ENCODE measurements at regions of chr20 and their contacts with region 1.

Region 1: DNA sequence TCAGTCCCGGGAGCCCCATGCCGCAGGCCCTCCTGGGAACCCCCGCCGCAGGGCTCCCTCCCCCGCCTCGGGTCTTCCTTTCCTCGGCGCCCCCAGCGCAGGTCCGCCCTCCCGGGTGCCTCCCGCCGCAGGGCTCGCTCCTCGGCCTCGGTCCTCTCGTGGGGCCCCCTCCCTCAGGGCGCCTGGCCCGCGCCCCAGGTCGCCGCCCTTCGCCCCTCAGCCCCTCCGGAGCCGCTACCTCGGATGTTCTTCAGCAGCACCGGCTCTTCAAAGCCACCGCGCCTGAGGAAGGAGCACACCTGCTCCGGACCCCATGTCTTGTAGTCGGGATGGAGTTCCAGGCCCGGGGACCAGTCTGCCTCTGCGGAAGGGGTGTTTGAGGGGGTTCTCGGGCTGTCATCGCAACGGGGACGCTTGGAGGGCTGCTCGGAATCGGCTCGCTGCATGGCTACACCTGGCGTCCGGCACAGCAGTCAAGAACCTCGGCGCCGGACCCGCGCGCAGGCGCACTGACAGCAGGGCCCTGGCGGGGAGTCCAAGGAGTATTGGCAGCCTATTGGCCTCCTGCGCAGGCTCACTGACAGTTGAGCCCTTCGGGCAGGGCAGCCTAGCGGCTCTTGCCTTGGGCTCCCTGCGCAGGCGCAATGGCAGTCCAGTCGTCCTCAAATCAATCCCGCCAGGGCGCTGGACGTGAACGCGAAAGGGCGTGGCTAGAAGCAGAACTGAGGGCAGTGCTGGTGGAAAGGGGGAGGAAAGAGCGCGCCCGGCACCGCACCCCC is at the start of gene SAMHD1:
- DNase-seq: peak; percentile 90
- ATAC-seq: peak; percentile 96
- H3K4me3 ChIP-seq: peak within 1 kb of the TSS; percentile 81 to 93 (median 88)
- H3K4me3 Mint-ChIP-seq: peak within 1 kb of the TSS; percentile 99
- H3K27ac ChIP-seq: peak within 1 kb of the TSS; percentile 48 to 78
- H3K27ac Mint-ChIP-seq: peak within 1 kb of the TSS; percentile 95
- H3K4me1 ChIP-seq: peaks cover 20 to 23% of the 10 kb centered on the region in 2 donors
- H3K4me1 Mint-ChIP-seq: peaks cover 27% of the 10 kb centered on the region
- H3K27me3 ChIP-seq: no peaks in the 10 kb centered on the region
- H3K27me3 Mint-ChIP-seq: no peaks in the 10 kb centered on the region
- CTCF ChIP-seq: no peak
- total RNA-seq, gene SAMHD1: 11.6 and 12.8 TPM in 2 replicates

Region 2: GRCh38 chr20:36773597-36774390 is 177.6 kb before region 1 on chr20 and contains the start of gene DSN1:
- CTCF ChIA-PET with region 1: no interaction called
- POLR2A ChIA-PET with region 1: no interaction called
- intact Hi-C with region 1: loop called (anchors 1 kb)
- DNase-seq: peak; percentile 98
- ATAC-seq: peak; percentile 86
- H3K4me3 ChIP-seq: peak within 1 kb of the TSS; percentile 84 to 96 (median 92)
- H3K4me3 Mint-ChIP-seq: peak within 1 kb of the TSS; percentile 89
- H3K27ac ChIP-seq: peak within 1 kb of the TSS; percentile 77 to 92
- H3K27ac Mint-ChIP-seq: peak within 1 kb of the TSS; percentile 99
- H3K4me1 ChIP-seq: peaks cover 8 to 16% of the 10 kb centered on the region in 2 donors
- H3K4me1 Mint-ChIP-seq: peaks cover 33% of the 10 kb centered on the region
- H3K27me3 ChIP-seq: no peaks in the 10 kb centered on the region
- H3K27me3 Mint-ChIP-seq: no peaks in the 10 kb centered on the region
- CTCF ChIP-seq: no peak
- total RNA-seq, gene DSN1: 17.1 and 18.4 TPM in 2 replicates

Region 3: GRCh38 chr20:37007898-37008649 is 56.7 kb after region 1 on chr20:
- CTCF ChIA-PET with region 1: no interaction called
- POLR2A ChIA-PET with region 1: no interaction called
- intact Hi-C with region 1: loop called (anchors 5 kb)
- DNase-seq: peak; percentile 51
- ATAC-seq: peak; percentile 36
- H3K4me3 ChIP-seq: no peak overlapping the region
- H3K4me3 Mint-ChIP-seq: peak overlapping the region; percentile 70
- H3K27ac ChIP-seq: peak overlapping the region; percentile 35 to 57
- H3K27ac Mint-ChIP-seq: peak overlapping the region; percentile 59
- H3K4me1 ChIP-seq: peaks cover 46 to 55% of the 10 kb centered on the region in 2 donors
- H3K4me1 Mint-ChIP-seq: peaks cover 38% of the 10 kb centered on the region
- H3K27me3 ChIP-seq: no peaks in the 10 kb centered on the region
- H3K27me3 Mint-ChIP-seq: no peaks in the 10 kb centered on the region
- CTCF ChIP-seq: peak; percentile 24

Region 4: GRCh38 chr20:37042986-37043972 is 91.9 kb after region 1 on chr20:
- CTCF ChIA-PET with region 1: no interaction called
- POLR2A ChIA-PET with region 1: no interaction called
- intact Hi-C with region 1: loop called (anchors 2 kb)
- DNase-seq: peak; percentile 67
- ATAC-seq: peak; percentile 53
- H3K4me3 ChIP-seq: peak overlapping the region; percentile 24 to 67 (median 44)
- H3K4me3 Mint-ChIP-seq: peak overlapping the region; percentile 85
- H3K27ac ChIP-seq: peak overlapping the region; percentile 76 to 89
- H3K27ac Mint-ChIP-seq: peak overlapping the region; percentile 89
- H3K4me1 ChIP-seq: peaks cover 23 to 28% of the 10 kb centered on the region in 2 donors
- H3K4me1 Mint-ChIP-seq: peaks cover 25% of the 10 kb centered on the region
- H3K27me3 ChIP-seq: no peaks in the 10 kb centered on the region
- H3K27me3 Mint-ChIP-seq: no peaks in the 10 kb centered on the region
- CTCF ChIP-seq: no peak

Region 5: DNA sequence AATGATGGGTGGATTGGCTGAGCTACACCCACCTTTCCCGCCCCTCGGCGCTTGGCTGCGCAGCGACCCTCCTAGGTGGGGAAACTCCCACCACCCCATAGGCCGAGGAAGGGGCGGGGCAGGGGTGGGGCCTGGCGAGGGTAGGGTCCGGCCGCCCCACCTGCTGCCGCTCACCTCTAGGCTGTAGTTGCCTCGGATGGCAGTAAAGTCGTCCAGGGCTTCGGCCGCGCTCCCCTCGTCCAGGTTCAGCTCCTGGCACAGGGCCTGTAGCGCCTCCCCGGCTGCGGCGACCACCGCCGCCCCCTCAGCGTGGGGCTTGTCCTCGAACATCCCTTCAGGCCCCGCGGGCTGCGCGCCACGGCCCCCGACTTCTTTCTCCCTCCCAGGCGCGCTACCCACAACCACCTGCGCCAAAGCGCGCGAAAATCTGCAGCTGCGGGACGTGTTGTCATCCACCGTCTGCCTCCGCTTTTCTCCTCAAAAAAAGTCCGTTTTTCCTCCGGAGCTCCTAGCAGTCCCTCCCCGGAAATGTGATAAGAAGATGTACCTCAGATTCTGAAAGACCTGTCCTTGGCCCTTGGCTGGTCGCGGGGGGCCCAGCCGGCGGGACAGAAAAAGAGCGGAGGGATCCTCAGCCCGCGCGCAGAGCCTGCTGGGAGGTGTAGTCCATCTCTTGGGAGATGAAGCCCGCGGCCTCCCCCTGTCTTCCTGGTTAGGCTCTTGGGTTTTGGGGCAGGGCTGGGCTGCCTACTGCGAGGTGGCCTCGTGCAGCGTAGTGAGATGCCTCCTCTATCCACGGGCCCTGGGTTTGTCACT is 144.4 kb after region 1 on chr20 and contains the start of gene RBL1:
- CTCF ChIA-PET with region 1: no interaction called
- POLR2A ChIA-PET with region 1: no interaction called
- intact Hi-C with region 1: loop called (anchors 1 kb)
- DNase-seq: peak; percentile 96
- ATAC-seq: peak; percentile 86
- H3K4me3 ChIP-seq: peak within 1 kb of the TSS; percentile 62 to 77 (median 73)
- H3K4me3 Mint-ChIP-seq: peak within 1 kb of the TSS; percentile 98
- H3K27ac ChIP-seq: peak within 1 kb of the TSS; percentile 88 to 95
- H3K27ac Mint-ChIP-seq: peak within 1 kb of the TSS; percentile 100
- H3K4me1 ChIP-seq: peaks cover 13 to 28% of the 10 kb centered on the region in 2 donors
- H3K4me1 Mint-ChIP-seq: peaks cover 29% of the 10 kb centered on the region
- H3K27me3 ChIP-seq: no peaks in the 10 kb centered on the region
- H3K27me3 Mint-ChIP-seq: no peaks in the 10 kb centered on the region
- CTCF ChIP-seq: peak; percentile 13
- total RNA-seq, gene RBL1: 25.5 and 27.8 TPM in 2 replicates

Region 6: GRCh38 chr20:37406010-37406998 is 454.9 kb after region 1 on chr20:
- CTCF ChIA-PET with region 1: no interaction called
- POLR2A ChIA-PET with region 1: no interaction called
- intact Hi-C with region 1: loop called (anchors 5 kb)
- DNase-seq: peak; percentile 63
- ATAC-seq: peak; percentile 37
- H3K4me3 ChIP-seq: peak overlapping the region in 4 of 5 experiments; percentile 17 to 68 (median 47)
- H3K4me3 Mint-ChIP-seq: peak overlapping the region; percentile 74
- H3K27ac ChIP-seq: no peak overlapping the region
- H3K27ac Mint-ChIP-seq: no peak overlapping the region
- H3K4me1 ChIP-seq: peaks cover 16 to 30% of the 10 kb centered on the region in 2 donors
- H3K4me1 Mint-ChIP-seq: peaks cover 28% of the 10 kb centered on the region
- H3K27me3 ChIP-seq: peaks cover 0 to 13% (median 2%) of the 10 kb centered on the region in 4 experiments
- H3K27me3 Mint-ChIP-seq: peaks cover 16% of the 10 kb centered on the region
- CTCF ChIP-seq: no peak

Region 7: GRCh38 chr20:37693635-37694626 is 742.5 kb after region 1 on chr20 and contains the start of gene CTNNBL1:
- CTCF ChIA-PET with region 1: no interaction called
- POLR2A ChIA-PET with region 1: no interaction called
- intact Hi-C with region 1: loop called (anchors 5 kb)
- DNase-seq: peak; percentile 97
- ATAC-seq: peak; percentile 94
- H3K4me3 ChIP-seq: peak within 1 kb of the TSS; percentile 61 to 97 (median 67)
- H3K4me3 Mint-ChIP-seq: peak within 1 kb of the TSS; percentile 99
- H3K27ac ChIP-seq: peak within 1 kb of the TSS; percentile 7 to 75
- H3K27ac Mint-ChIP-seq: peak within 1 kb of the TSS; percentile 94
- H3K4me1 ChIP-seq: peaks cover 23 to 31% of the 10 kb centered on the region in 2 donors
- H3K4me1 Mint-ChIP-seq: peaks cover 45% of the 10 kb centered on the region
- H3K27me3 ChIP-seq: peaks cover 0 to 8% (median 6%) of the 10 kb centered on the region in 4 experiments
- H3K27me3 Mint-ChIP-seq: peaks cover 8% of the 10 kb centered on the region
- CTCF ChIP-seq: no peak
- total RNA-seq, gene CTNNBL1: 64.7 and 64.8 TPM in 2 replicates

Measured in B cell (primary cell).